Breast epithelium (tissue), 4 donors: ENCODE measurements at regions of chr10 and their contacts with region 1.

Region 1: GRCh38 chr10:125514206-125515186 is 168.5 kb downstream of the TEX36 start:
- DNase-seq: no peak
- H3K4me3 ChIP-seq: no peak overlapping the region
- H3K27ac ChIP-seq: no peak overlapping the region
- H3K4me1 ChIP-seq: no peaks in the 10 kb centered on the region
- H3K27me3 ChIP-seq: no peaks in the 10 kb centered on the region
- CTCF ChIP-seq: no peak
- POLR2A ChIP-seq: no peak

Region 2: DNA sequence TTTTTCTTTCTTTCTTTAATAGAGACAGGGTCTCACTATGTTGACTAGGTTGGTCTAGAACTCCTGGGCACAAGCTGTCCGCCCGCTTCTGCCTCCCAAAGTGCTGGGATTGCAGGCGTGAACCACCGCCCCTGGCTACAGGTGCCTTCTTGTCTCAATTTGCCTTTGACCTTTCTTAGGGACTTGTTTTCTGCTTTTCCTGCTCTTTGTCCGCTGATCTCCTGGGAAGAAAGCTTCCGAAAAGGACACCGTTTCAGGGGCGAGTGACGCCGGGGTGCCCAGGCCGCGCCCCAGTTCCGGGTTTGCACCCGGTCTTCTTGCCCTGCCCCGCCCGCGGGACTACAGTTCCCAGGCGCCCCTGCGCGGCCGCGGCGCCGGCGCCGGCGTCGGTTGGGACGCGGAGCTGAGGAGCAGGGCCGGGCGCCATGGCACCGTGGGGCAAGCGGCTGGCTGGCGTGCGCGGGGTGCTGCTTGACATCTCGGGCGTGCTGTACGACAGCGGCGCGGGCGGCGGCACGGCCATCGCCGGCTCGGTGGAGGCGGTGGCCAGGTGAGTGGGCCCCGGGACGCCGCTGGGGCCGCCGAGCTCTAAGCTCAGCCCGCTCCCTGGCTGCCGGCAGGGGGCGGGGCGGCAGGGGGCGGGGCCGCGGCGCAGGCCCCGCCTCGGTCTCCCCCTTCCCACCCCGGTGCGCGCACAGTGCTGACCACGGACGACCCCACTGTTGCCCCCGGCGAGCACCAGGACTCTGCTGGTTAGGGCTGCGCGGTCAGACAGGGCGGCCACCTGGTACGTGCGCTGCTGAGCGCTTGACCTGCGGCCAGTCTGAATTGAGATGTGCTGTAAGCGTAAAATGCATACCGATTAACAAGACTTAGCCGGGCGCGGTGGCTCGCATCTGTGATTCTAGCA is 1052.8 kb before region 1 on chr10 and contains the start of gene LHPP:
- intact Hi-C with region 1: no loop called
- DNase-seq: peak; percentile 71 to 78
- H3K4me3 ChIP-seq: peak within 1 kb of the TSS; percentile 52 to 93 (median 66)
- H3K27ac ChIP-seq: peak within 1 kb of the TSS; percentile 87 to 93
- H3K4me1 ChIP-seq: peaks cover 0 to 5% of the 10 kb centered on the region in 2 donors
- H3K27me3 ChIP-seq: no peaks in the 10 kb centered on the region
- CTCF ChIP-seq: peak in 1 of 3 donors; percentile 55
- POLR2A ChIP-seq: no peak
- total RNA-seq, gene LHPP: 13.1 to 19.6 (median 17.0) TPM

Region 3: DNA sequence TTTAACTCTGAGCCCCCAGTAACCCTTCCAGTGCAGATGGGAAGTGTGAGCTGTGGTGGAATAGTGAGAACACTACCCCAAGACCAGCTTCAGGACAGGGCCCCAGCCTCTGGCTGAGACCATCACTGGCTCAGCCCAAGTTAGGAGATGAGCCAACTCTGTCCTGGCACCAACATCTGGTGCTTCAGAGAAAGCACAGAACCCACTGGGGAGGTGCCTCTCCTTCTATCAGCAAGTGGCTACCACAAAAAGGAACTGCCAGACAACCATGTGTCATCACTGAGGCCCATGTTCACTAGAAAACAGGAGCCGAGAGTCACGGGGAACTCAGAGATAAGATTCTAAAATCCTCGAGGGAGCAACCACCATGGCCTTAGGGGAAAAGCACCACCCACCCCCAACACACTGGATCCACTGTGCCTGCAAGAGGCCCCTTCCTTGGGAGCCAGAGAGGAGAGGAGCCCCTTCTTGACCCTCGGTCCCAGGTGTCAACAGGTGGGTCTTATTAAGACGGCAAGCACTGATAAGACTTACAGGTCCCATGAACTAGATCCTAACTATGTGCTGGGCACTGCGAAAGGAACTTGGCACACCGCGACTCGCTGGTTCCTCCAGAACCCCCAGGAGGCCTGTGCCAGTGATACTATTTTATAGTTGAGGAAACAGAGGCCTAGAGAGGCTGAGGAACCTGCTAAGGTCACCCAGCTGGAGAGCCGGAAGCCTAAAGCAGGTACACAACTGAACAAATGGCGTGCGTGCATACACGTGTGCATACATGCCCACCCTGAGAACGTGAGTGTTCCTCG is 873.0 kb before region 1 on chr10:
- intact Hi-C with region 1: loop called (anchors 5 kb)
- DNase-seq: no peak
- H3K4me3 ChIP-seq: peak overlapping the region in 1 of 3 donors; percentile 0
- H3K27ac ChIP-seq: peak overlapping the region; percentile 33 to 48
- H3K4me1 ChIP-seq: peaks cover 7 to 13% of the 10 kb centered on the region in 2 donors
- H3K27me3 ChIP-seq: no peaks in the 10 kb centered on the region
- CTCF ChIP-seq: no peak
- POLR2A ChIP-seq: no peak